ENCODE measurements at regions of chr13 and their contacts with region 1.

Region 1: GRCh38 chr13:48233046-48233907 is at the start of gene ITM2B:
- DNase-seq: peak; percentile 57
- ATAC-seq: peak; percentile 88
- H3K4me3 ChIP-seq: peak within 1 kb of the TSS; percentile 98 to 100 (median 99)
- H3K27ac ChIP-seq: peak within 1 kb of the TSS; percentile 98
- H3K4me1 ChIP-seq: peaks cover 75% of the 10 kb centered on the region
- H3K27me3 ChIP-seq: no peaks in the 10 kb centered on the region; a peak in 1 of 5 replicates
- CTCF ChIP-seq: peak; percentile 65
- EP300 ChIP-seq: no peak
- POLR2A ChIP-seq: peak; percentile 48 to 92
- RAD21 ChIP-seq: peak; percentile 86
- total RNA-seq, gene ITM2B: 80.7 and 158 TPM in 2 replicates

Region 2: DNA sequence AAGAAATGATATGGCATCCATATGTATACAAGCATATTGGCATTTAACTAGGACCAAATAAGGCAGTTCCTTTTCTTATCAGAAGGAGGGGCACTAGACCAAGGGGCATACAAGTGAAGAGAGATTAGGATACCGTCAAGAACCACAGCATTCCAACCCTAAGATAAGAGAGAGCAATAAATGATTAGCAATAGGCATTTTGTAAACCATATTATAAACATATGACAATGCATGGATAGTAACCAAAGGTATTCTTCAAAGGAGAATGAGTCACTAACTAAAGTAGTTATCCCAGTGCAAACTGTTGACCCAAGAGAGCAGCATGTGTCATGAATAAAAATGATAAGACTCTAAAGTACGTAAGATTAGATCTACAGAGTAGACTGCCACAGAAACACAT is 835.5 kb before region 1 on chr13:
- CTCF ChIA-PET with region 1: no interaction called
- POLR2A ChIA-PET with region 1: no interaction called
- in situ Hi-C with region 1: no loop called
- intact Hi-C with region 1: no loop called
- DNase-seq: no peak
- ATAC-seq: no peak
- H3K4me3 ChIP-seq: no peak overlapping the region
- H3K27ac ChIP-seq: no peak overlapping the region
- H3K4me1 ChIP-seq: no peaks in the 10 kb centered on the region
- H3K27me3 ChIP-seq: no peaks in the 10 kb centered on the region
- CTCF ChIP-seq: no peak
- EP300 ChIP-seq: no peak
- POLR2A ChIP-seq: no peak
- RAD21 ChIP-seq: no peak

Region 3: GRCh38 chr13:48126944-48127830 is 106.1 kb before region 1 on chr13:
- CTCF ChIA-PET with region 1: interaction called, 4 read pairs
- POLR2A ChIA-PET with region 1: interaction called, 11 read pairs
- in situ Hi-C with region 1: loop called (anchors 5 kb)
- intact Hi-C with region 1: loop called (anchors 1 kb)
- DNase-seq: peak; percentile 63
- ATAC-seq: peak; percentile 73
- H3K4me3 ChIP-seq: peak overlapping the region in 1 of 3 experiments; percentile 27; a peak in 1 of 6 replicates
- H3K27ac ChIP-seq: no peak overlapping the region
- H3K4me1 ChIP-seq: peaks cover 53% of the 10 kb centered on the region
- H3K27me3 ChIP-seq: no peaks in the 10 kb centered on the region
- CTCF ChIP-seq: peak; percentile 74
- EP300 ChIP-seq: no peak
- POLR2A ChIP-seq: no peak
- RAD21 ChIP-seq: no peak

Region 4: GRCh38 chr13:48222358-48223301 is 10.6 kb before region 1 on chr13:
- CTCF ChIA-PET with region 1: no interaction called
- POLR2A ChIA-PET with region 1: interaction called, 29 read pairs
- in situ Hi-C with region 1: no loop called
- intact Hi-C with region 1: no loop called
- DNase-seq: no peak
- ATAC-seq: peak; percentile 51
- H3K4me3 ChIP-seq: peak overlapping the region; percentile 23 to 58 (median 49)
- H3K27ac ChIP-seq: no peak overlapping the region
- H3K4me1 ChIP-seq: peaks cover 48% of the 10 kb centered on the region
- H3K27me3 ChIP-seq: no peaks in the 10 kb centered on the region
- CTCF ChIP-seq: no peak
- EP300 ChIP-seq: no peak
- POLR2A ChIP-seq: no peak
- RAD21 ChIP-seq: no peak

Region 5: GRCh38 chr13:48263196-48263595 is 29.9 kb after region 1 on chr13:
- CTCF ChIA-PET with region 1: no interaction called
- POLR2A ChIA-PET with region 1: no interaction called
- in situ Hi-C with region 1: no loop called
- intact Hi-C with region 1: no loop called
- DNase-seq: no peak
- ATAC-seq: no peak
- H3K4me3 ChIP-seq: no peak overlapping the region
- H3K27ac ChIP-seq: no peak overlapping the region
- H3K4me1 ChIP-seq: peaks cover 13% of the 10 kb centered on the region
- H3K27me3 ChIP-seq: no peaks in the 10 kb centered on the region
- CTCF ChIP-seq: no peak
- EP300 ChIP-seq: no peak
- POLR2A ChIP-seq: no peak
- RAD21 ChIP-seq: no peak

Region 6: GRCh38 chr13:48303359-48304142 is 70.3 kb after region 1 on chr13 and contains the start of gene RB1:
- CTCF ChIA-PET with region 1: no interaction called
- POLR2A ChIA-PET with region 1: interaction called, 9 read pairs
- in situ Hi-C with region 1: no loop called
- intact Hi-C with region 1: loop called (anchors 5 kb)
- DNase-seq: peak; percentile 80
- ATAC-seq: peak; percentile 92
- H3K4me3 ChIP-seq: peak within 1 kb of the TSS; percentile 79 to 91 (median 91)
- H3K27ac ChIP-seq: peak within 1 kb of the TSS; percentile 94
- H3K4me1 ChIP-seq: peaks cover 20% of the 10 kb centered on the region
- H3K27me3 ChIP-seq: no peaks in the 10 kb centered on the region; a peak in 1 of 5 replicates
- CTCF ChIP-seq: 0 out of 2 replicates have a peak, but pooled peaks have one; percentile 2
- EP300 ChIP-seq: 0 out of 4 replicates have a peak, but pooled peaks of 1 of the 2 experiments have one; percentile 24
- POLR2A ChIP-seq: peak; percentile 73 to 82
- RAD21 ChIP-seq: peak; percentile 13
- total RNA-seq, gene RB1: 23.7 and 35.7 TPM in 2 replicates

Region 7: GRCh38 chr13:48346583-48346982 is 113.3 kb after region 1 on chr13:
- CTCF ChIA-PET with region 1: no interaction called
- POLR2A ChIA-PET with region 1: no interaction called
- in situ Hi-C with region 1: no loop called
- intact Hi-C with region 1: no loop called
- DNase-seq: no peak
- ATAC-seq: no peak
- H3K4me3 ChIP-seq: no peak overlapping the region
- H3K27ac ChIP-seq: no peak overlapping the region
- H3K4me1 ChIP-seq: peaks cover 6% of the 10 kb centered on the region
- H3K27me3 ChIP-seq: no peaks in the 10 kb centered on the region
- CTCF ChIP-seq: no peak
- EP300 ChIP-seq: no peak
- POLR2A ChIP-seq: no peak
- RAD21 ChIP-seq: no peak

Region 8: GRCh38 chr13:48370815-48371214 is 137.5 kb after region 1 on chr13:
- CTCF ChIA-PET with region 1: no interaction called
- POLR2A ChIA-PET with region 1: no interaction called
- in situ Hi-C with region 1: no loop called
- intact Hi-C with region 1: no loop called
- DNase-seq: peak; percentile 5
- ATAC-seq: no peak
- H3K4me3 ChIP-seq: no peak overlapping the region
- H3K27ac ChIP-seq: no peak overlapping the region
- H3K4me1 ChIP-seq: peaks cover 12% of the 10 kb centered on the region
- H3K27me3 ChIP-seq: no peaks in the 10 kb centered on the region
- CTCF ChIP-seq: no peak
- EP300 ChIP-seq: no peak
- POLR2A ChIP-seq: no peak
- RAD21 ChIP-seq: no peak

Measured in HepG2 (cell line).